Activated CD4-positive, alpha-beta T cell treated with anti-CD3 and anti-CD28 coated beads, Interleukin-2, amount 10 ng/mL, durations not matched to agents 24 days and 14 days (primary cell): ENCODE measurements at regions of chr11 and their contacts with region 1.

Region 1: DNA sequence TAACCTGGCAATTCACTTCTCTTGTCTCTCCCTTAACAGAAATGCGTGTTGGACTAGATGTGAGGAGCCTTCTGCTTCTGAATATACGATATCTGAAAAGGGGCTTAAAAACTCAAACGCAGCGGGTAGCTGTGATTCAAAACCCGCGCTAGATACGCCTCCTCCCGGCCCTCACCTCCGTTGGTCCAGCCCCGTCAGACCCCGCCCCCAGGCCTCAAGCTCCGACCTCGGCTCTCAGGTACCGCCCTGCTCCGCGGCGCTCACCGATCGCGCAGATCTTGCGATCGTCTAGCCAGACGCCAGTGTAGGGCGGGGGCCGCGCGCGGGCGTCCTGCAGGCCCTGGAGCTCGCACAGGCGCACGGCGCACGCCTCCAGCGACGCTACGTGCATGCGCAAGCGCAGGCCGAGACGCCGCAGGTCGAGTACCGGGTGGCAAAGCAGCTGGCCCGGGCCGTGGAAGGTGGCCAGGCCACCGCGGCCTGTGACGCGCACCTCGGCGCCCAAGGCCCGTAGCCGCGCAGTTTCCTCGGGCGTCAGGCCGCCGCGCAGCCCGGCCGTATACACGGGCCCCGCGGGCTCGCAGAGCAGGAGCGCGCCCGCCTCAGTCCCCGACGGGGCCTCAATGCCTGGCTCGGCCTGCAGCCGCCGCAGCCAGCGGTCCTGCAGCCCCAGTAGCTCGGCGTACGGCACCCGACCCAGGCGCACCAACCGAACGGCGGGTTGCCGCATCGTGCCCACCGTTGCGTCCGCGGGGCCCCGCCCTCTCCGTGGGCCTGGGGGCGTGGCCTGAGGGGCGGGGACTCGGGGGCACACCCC is at the start of gene LIPT2:
- DNase-seq: peak; percentile 99
- H3K4me3 Mint-ChIP-seq: peak within 1 kb of the TSS; percentile 86
- H3K27ac Mint-ChIP-seq: peak within 1 kb of the TSS; percentile 80
- H3K4me1 Mint-ChIP-seq: peaks cover 15% of the 10 kb centered on the region
- H3K27me3 Mint-ChIP-seq: peaks cover 1% of the 10 kb centered on the region
- total RNA-seq, gene LIPT2: 3.1 and 4.7 TPM in 2 replicates

Region 2: GRCh38 chr11:74398244-74399159 is 94.7 kb before region 1 on chr11 and contains the start of gene PGM2L1:
- intact Hi-C with region 1: loop called (anchors 1 kb)
- DNase-seq: peak; percentile 97
- H3K4me3 Mint-ChIP-seq: peak within 1 kb of the TSS; percentile 97
- H3K27ac Mint-ChIP-seq: peak within 1 kb of the TSS; percentile 100
- H3K4me1 Mint-ChIP-seq: peaks cover 24% of the 10 kb centered on the region
- H3K27me3 Mint-ChIP-seq: no peaks in the 10 kb centered on the region
- total RNA-seq, gene PGM2L1: 4.7 and 4.9 TPM in 2 replicates

Region 3: DNA sequence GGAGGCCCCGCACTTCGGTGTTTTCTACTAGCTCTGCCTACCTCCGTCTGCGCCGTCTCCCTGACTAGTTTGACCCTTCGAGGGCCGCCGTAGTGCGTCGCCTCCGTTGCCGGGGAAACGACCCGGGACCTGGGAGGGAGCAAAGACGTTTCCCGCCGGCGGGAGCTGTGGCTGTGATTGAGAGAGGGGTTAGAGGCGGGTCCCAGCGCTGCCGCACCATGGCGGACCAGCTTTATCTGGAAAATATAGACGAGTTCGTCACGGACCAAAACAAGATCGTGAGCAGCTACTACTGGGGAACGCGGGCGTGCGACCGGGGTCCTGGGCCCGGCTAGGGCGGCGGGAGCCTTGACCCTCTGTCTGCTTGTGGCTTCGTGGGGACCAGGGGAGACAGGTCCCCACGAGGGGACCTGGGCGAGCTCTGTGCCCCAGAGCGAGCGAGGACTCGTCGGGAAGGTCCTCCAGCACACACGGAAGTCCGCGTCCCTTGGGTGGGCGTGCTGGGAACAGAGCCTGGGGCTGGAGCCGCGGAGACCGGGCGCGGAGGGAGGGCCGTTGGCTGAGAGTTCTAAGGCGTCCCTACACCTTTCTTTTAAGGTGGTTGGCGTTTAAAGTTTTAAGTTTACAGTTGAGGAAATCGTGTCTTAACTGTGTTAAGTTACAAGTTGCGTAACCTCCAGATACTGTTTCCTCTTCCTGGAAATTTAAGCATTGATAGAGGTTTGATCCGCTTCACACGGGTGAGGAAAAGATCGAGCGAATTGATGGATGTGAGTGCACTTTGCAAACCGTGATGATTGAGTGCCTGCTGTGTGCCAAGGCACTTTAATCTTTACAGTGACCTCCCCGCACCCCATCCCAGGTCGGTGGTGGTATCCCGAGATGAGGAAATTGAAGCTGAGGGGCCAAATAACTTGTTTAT is 99.5 kb after region 1 on chr11 and contains the start of gene POLD3:
- intact Hi-C with region 1: loop called (anchors 1 kb)
- DNase-seq: peak; percentile 98
- H3K4me3 Mint-ChIP-seq: peak within 1 kb of the TSS; percentile 96
- H3K27ac Mint-ChIP-seq: peak within 1 kb of the TSS; percentile 90
- H3K4me1 Mint-ChIP-seq: peaks cover 19% of the 10 kb centered on the region
- H3K27me3 Mint-ChIP-seq: peaks cover 6% of the 10 kb centered on the region
- total RNA-seq, gene POLD3: 53.5 and 53.6 TPM in 2 replicates

Region 4: GRCh38 chr11:74909385-74909784 is 416.2 kb after region 1 on chr11:
- intact Hi-C with region 1: no loop called
- DNase-seq: no peak
- H3K4me3 Mint-ChIP-seq: no peak overlapping the region
- H3K27ac Mint-ChIP-seq: no peak overlapping the region
- H3K4me1 Mint-ChIP-seq: peaks cover 2% of the 10 kb centered on the region
- H3K27me3 Mint-ChIP-seq: no peaks in the 10 kb centered on the region

Region 5: DNA sequence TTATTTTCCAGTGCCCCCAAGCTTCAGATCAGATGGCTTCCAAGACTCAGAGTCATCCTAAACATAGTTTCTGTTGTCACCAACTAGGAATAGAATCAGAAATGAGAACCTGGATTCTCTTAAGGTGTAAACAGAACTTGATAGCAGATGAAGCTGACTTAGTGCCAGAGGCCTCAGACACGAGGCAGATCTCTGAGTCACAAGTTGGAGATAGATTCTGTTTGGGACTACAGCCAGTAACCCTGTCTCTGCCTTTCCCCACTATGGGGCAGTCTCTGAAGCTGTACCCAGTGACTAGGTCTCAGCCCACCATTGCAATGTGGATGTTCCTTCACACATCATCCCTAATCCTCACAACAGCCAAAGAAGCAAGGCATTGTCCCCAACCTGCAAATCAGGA is 520.9 kb after region 1 on chr11:
- intact Hi-C with region 1: no loop called
- DNase-seq: no peak
- H3K4me3 Mint-ChIP-seq: no peak overlapping the region
- H3K27ac Mint-ChIP-seq: no peak overlapping the region
- H3K4me1 Mint-ChIP-seq: peaks cover 3% of the 10 kb centered on the region
- H3K27me3 Mint-ChIP-seq: no peaks in the 10 kb centered on the region